OCI-LY7 (cell line): ENCODE measurements at regions of chr2 and their contacts with region 1.

Region 1: GRCh38 chr2:100142393-100142792 is at the start of gene AFF3:
- DNase-seq: peak; percentile 99
- H3K4me3 ChIP-seq: peak within 1 kb of the TSS; percentile 91
- H3K27ac ChIP-seq: peak within 1 kb of the TSS; percentile 98
- H3K4me1 ChIP-seq: peaks cover 51% of the 10 kb centered on the region
- CTCF ChIP-seq: peak; percentile 17; the same call in 1 of the 2 replicates
- total RNA-seq, gene AFF3: 133 and 162 TPM in 2 replicates

Region 2: DNA sequence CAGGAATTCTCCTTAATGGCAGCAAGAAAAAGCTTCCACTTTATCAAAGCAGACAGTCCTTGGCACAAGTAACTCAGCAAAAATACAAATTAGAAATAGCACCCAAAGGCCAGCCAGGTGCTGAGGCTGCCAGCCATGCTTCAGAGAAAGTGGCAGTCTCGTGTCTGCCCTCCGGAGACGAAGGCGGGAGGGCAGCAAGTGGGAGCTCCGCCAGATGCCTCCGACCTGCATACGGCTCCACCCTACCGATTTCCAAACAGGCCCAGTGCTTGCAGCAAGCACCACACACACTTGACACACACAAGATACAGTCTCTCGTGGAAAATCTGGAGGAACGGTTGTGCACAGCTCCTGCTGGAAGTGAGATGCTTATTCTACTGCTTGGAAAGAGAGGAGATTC is 517.7 kb before region 1 on chr2:
- CTCF ChIA-PET with region 1: no interaction called
- POLR2A ChIA-PET with region 1: no interaction called
- intact Hi-C with region 1: no loop called
- DNase-seq: no peak
- H3K4me3 ChIP-seq: no peak overlapping the region
- H3K27ac ChIP-seq: no peak overlapping the region
- H3K4me1 ChIP-seq: peaks cover 12% of the 10 kb centered on the region
- CTCF ChIP-seq: no peak

Region 3: DNA sequence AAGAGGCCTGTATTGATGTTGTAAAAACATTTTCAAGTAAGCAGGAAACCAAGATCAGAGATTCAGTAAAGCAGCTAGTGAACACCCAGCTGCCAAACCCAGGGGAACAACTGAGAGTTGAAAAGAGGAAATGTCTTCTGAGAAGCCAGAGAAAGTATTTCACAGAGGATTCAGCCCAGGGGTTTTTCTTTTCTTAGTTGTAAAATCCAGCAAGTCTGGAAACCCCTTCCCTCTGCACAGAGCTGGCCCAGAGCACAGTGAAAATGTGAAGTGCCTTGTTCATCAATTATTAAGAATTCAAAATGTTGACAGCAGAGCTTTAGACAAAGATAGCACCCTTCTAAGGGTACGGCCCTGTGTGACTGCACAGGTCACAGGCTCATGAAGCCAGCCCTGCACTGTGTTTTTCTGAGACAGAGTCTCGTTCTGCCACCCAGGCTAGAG is 28.4 kb before region 1 on chr2:
- CTCF ChIA-PET with region 1: interaction called, 5 read pairs
- POLR2A ChIA-PET with region 1: interaction called, 14 read pairs
- intact Hi-C with region 1: loop called (anchors 1 kb)
- DNase-seq: peak; percentile 87
- H3K4me3 ChIP-seq: no peak overlapping the region
- H3K27ac ChIP-seq: peak overlapping the region; percentile 81
- H3K4me1 ChIP-seq: peaks cover 64% of the 10 kb centered on the region
- CTCF ChIP-seq: no peak

Region 4: GRCh38 chr2:100235098-100235497 is 92.7 kb after region 1 on chr2:
- CTCF ChIA-PET with region 1: interaction called, 3 read pairs
- POLR2A ChIA-PET with region 1: interaction called, 29 read pairs
- intact Hi-C with region 1: loop called (anchors 1 kb)
- DNase-seq: peak; percentile 90
- H3K4me3 ChIP-seq: peak overlapping the region; percentile 17
- H3K27ac ChIP-seq: peak overlapping the region; percentile 49
- H3K4me1 ChIP-seq: peaks cover 33% of the 10 kb centered on the region
- CTCF ChIP-seq: no peak

Region 5: GRCh38 chr2:100248971-100249490 is 106.6 kb after region 1 on chr2:
- CTCF ChIA-PET with region 1: interaction called, 5 read pairs
- POLR2A ChIA-PET with region 1: interaction called, 21 read pairs
- intact Hi-C with region 1: loop called (anchors 1 kb)
- DNase-seq: peak; percentile 51
- H3K4me3 ChIP-seq: peak overlapping the region; percentile 1
- H3K27ac ChIP-seq: peak overlapping the region; percentile 93
- H3K4me1 ChIP-seq: peaks cover 76% of the 10 kb centered on the region
- CTCF ChIP-seq: no peak

Region 6: GRCh38 chr2:100562732-100563720 is 420.6 kb after region 1 on chr2 and contains the start of gene PDCL3:
- CTCF ChIA-PET with region 1: no interaction called
- POLR2A ChIA-PET with region 1: no interaction called
- intact Hi-C with region 1: loop called (anchors 10 kb)
- DNase-seq: peak; percentile 98
- H3K4me3 ChIP-seq: peak within 1 kb of the TSS; percentile 79
- H3K27ac ChIP-seq: peak within 1 kb of the TSS; percentile 79
- H3K4me1 ChIP-seq: peaks cover 19% of the 10 kb centered on the region
- CTCF ChIP-seq: 0 out of 2 replicates have a peak, but pooled peaks have one; percentile 3
- total RNA-seq, gene PDCL3: 10.6 and 12.3 TPM in 2 replicates